Heart left ventricle (tissue), 16 donors: ENCODE measurements at regions of chr1 and their contacts with region 1.

Region 1: GRCh38 chr1:56578963-56579875 is at the start of gene PLPP3:
- DNase-seq: peak; percentile 87 to 93 (median 91)
- ATAC-seq: peak; percentile 82 to 93 (median 88)
- H3K4me3 ChIP-seq: peak within 1 kb of the TSS; percentile 82 to 99 (median 94)
- H3K27ac ChIP-seq: peak within 1 kb of the TSS; percentile 94 to 99 (median 98)
- H3K4me1 ChIP-seq: peaks cover 0 to 32% (median 11%) of the 10 kb centered on the region in 12 donors
- H3K27me3 ChIP-seq: no peaks in the 10 kb centered on the region
- CTCF ChIP-seq: peak; percentile 27 to 76 (median 52)
- POLR2A ChIP-seq: peak in 1 of 2 donors; percentile 94
- total RNA-seq, gene PLPP3: 75.8 to 221 (median 97.8) TPM

Region 2: GRCh38 chr1:55375617-55376258 is 1203.5 kb before region 1 on chr1:
- intact Hi-C with region 1: loop called in 6 of 10 experiments (anchors 1 to 5 kb)
- DNase-seq: peak in 2 of 5 donors; percentile 36 to 60
- ATAC-seq: peak in 1 of 4 donors; percentile 50
- H3K4me3 ChIP-seq: no peak overlapping the region
- H3K27ac ChIP-seq: peak overlapping the region in 1 of 12 donors; percentile 0
- H3K4me1 ChIP-seq: peaks cover 0 to 10% (median 0%) of the 10 kb centered on the region in 12 donors
- H3K27me3 ChIP-seq: no peaks in the 10 kb centered on the region
- CTCF ChIP-seq: peak; percentile 86 to 97 (median 92)
- POLR2A ChIP-seq: no peak

Region 3: GRCh38 chr1:56081173-56081572 is 498.0 kb before region 1 on chr1:
- intact Hi-C with region 1: loop called in 1 of 10 experiments (anchors 5 kb)
- DNase-seq: peak in 4 of 5 donors; percentile 50 to 76 (median 60)
- ATAC-seq: peak; percentile 77 to 89 (median 86)
- H3K4me3 ChIP-seq: no peak overlapping the region
- H3K27ac ChIP-seq: peak overlapping the region in 6 of 12 donors; percentile 30 to 70 (median 52)
- H3K4me1 ChIP-seq: peaks cover 0 to 15% (median 3%) of the 10 kb centered on the region in 12 donors
- H3K27me3 ChIP-seq: no peaks in the 10 kb centered on the region
- CTCF ChIP-seq: no peak
- POLR2A ChIP-seq: no peak

Region 4: DNA sequence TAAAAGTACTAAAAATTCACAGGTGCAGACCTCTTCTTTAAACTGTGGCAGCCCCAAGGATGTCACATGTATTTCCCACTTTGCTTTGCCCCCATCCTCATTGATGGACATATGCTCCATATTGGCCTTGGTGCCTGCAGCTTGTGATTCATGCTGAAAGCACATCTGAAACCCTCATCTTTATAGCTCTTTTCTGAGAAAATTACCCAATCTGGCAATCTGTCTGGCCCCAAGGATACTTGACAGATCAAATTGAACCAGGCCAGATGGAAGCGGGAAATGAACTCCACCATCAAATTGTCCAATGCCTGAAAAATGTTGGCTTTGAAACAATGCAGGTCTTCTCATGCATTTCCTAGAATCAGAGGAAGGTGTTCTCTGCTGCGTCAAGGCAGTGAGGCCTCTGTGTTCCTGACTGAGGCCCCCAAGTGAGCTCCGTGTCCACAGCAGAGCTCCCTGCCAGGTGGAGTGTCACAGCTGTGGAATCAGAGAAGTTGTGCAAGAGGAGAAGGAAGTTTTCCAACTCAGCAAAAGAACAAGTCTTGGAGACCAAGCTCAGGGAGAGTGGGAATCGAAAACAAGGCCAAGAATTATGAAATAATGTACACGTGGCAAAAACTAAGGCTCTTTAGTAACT is 323.6 kb before region 1 on chr1:
- intact Hi-C with region 1: loop called in 2 of 10 experiments (anchors 5 to 10 kb)
- DNase-seq: peak; percentile 60 to 86 (median 74)
- ATAC-seq: peak; percentile 87 to 94 (median 92)
- H3K4me3 ChIP-seq: no peak overlapping the region
- H3K27ac ChIP-seq: peak overlapping the region in 10 of 12 donors; percentile 7 to 44 (median 19)
- H3K4me1 ChIP-seq: peaks cover 0 to 49% (median 25%) of the 10 kb centered on the region in 12 donors
- H3K27me3 ChIP-seq: no peaks in the 10 kb centered on the region
- CTCF ChIP-seq: no peak
- POLR2A ChIP-seq: no peak

Region 5: GRCh38 chr1:56416471-56416882 is 162.7 kb before region 1 on chr1:
- intact Hi-C with region 1: loop called in 7 of 10 experiments (anchors 2 to 10 kb)
- DNase-seq: no peak
- ATAC-seq: no peak
- H3K4me3 ChIP-seq: no peak overlapping the region
- H3K27ac ChIP-seq: no peak overlapping the region
- H3K4me1 ChIP-seq: peaks cover 0 to 42% (median 12%) of the 10 kb centered on the region in 12 donors
- H3K27me3 ChIP-seq: no peaks in the 10 kb centered on the region
- CTCF ChIP-seq: peak in 1 of 12 donors; percentile 11
- POLR2A ChIP-seq: no peak

Region 6: GRCh38 chr1:56502700-56503245 is 76.4 kb before region 1 on chr1:
- intact Hi-C with region 1: loop called in 6 of 10 experiments (anchors 5 to 10 kb)
- DNase-seq: no peak
- ATAC-seq: peak in 3 of 4 donors; percentile 12 to 65 (median 49)
- H3K4me3 ChIP-seq: no peak overlapping the region
- H3K27ac ChIP-seq: peak overlapping the region in 6 of 12 donors; percentile 3 to 53 (median 24)
- H3K4me1 ChIP-seq: peaks cover 7 to 89% (median 68%) of the 10 kb centered on the region in 12 donors
- H3K27me3 ChIP-seq: no peaks in the 10 kb centered on the region
- CTCF ChIP-seq: no peak
- POLR2A ChIP-seq: no peak

Region 7: GRCh38 chr1:56535939-56536338 is 43.3 kb before region 1 on chr1:
- intact Hi-C with region 1: loop called in 3 of 10 experiments (anchors 5 kb)
- DNase-seq: peak in 4 of 5 donors; percentile 55 to 71 (median 64)
- ATAC-seq: peak; percentile 81 to 87 (median 84)
- H3K4me3 ChIP-seq: no peak overlapping the region
- H3K27ac ChIP-seq: peak overlapping the region in 11 of 12 donors; percentile 32 to 77 (median 62)
- H3K4me1 ChIP-seq: peaks cover 14 to 99% (median 91%) of the 10 kb centered on the region in 12 donors
- H3K27me3 ChIP-seq: no peaks in the 10 kb centered on the region
- CTCF ChIP-seq: no peak
- POLR2A ChIP-seq: no peak

Region 8: GRCh38 chr1:57307392-57308170 is 728.4 kb after region 1 on chr1:
- intact Hi-C with region 1: no loop called
- DNase-seq: peak in 4 of 5 donors; percentile 30 to 61 (median 46)
- ATAC-seq: peak; percentile 65 to 94 (median 86)
- H3K4me3 ChIP-seq: no peak overlapping the region
- H3K27ac ChIP-seq: peak overlapping the region in 2 of 12 donors; percentile 36 to 43
- H3K4me1 ChIP-seq: peaks cover 0 to 11% (median 0%) of the 10 kb centered on the region in 12 donors
- H3K27me3 ChIP-seq: no peaks in the 10 kb centered on the region
- CTCF ChIP-seq: no peak
- POLR2A ChIP-seq: no peak